ENCODE measurements at regions of chr1 and their contacts with region 1.

Region 1: GRCh38 chr1:95043141-95043980 is 29.4 kb downstream of the ALG14 start:
- DNase-seq: peak; percentile 70
- H3K4me3 ChIP-seq: peak overlapping the region in 1 of 2 experiments; percentile 20; a peak in 1 of 4 replicates
- H3K27ac ChIP-seq: no peak overlapping the region; a peak in 1 of 4 replicates
- H3K4me1 ChIP-seq: peaks cover 8 to 9% of the 10 kb centered on the region in 2 experiments; a peak in 3 of 4 replicates
- H3K27me3 ChIP-seq: no peaks in the 10 kb centered on the region
- CTCF ChIP-seq: peak; percentile 99
- EP300 ChIP-seq: no peak
- RAD21 ChIP-seq: peak; percentile 98

Region 2: GRCh38 chr1:94522304-94522703 is 521.1 kb before region 1 on chr1:
- CTCF ChIA-PET with region 1: interaction called, 11 read pairs
- POLR2A ChIA-PET with region 1: no interaction called
- DNase-seq: no peak
- H3K4me3 ChIP-seq: no peak overlapping the region
- H3K27ac ChIP-seq: no peak overlapping the region
- H3K4me1 ChIP-seq: peaks cover 0 to 2% of the 10 kb centered on the region in 2 experiments; a peak in 1 of 4 replicates
- H3K27me3 ChIP-seq: no peaks in the 10 kb centered on the region
- CTCF ChIP-seq: peak; percentile 68
- EP300 ChIP-seq: no peak
- RAD21 ChIP-seq: peak; percentile 87

Region 3: GRCh38 chr1:94825936-94826335 is 217.4 kb before region 1 on chr1:
- CTCF ChIA-PET with region 1: interaction called, 19 read pairs
- POLR2A ChIA-PET with region 1: no interaction called
- DNase-seq: no peak
- H3K4me3 ChIP-seq: no peak overlapping the region
- H3K27ac ChIP-seq: no peak overlapping the region
- H3K4me1 ChIP-seq: peaks cover 0 to 15% of the 10 kb centered on the region in 2 experiments; a peak in 2 of 4 replicates
- H3K27me3 ChIP-seq: no peaks in the 10 kb centered on the region
- CTCF ChIP-seq: no peak
- EP300 ChIP-seq: no peak
- RAD21 ChIP-seq: no peak

Region 4: GRCh38 chr1:94854458-94855306 is 188.7 kb before region 1 on chr1:
- CTCF ChIA-PET with region 1: interaction called, 186 read pairs
- POLR2A ChIA-PET with region 1: interaction called, 12 read pairs
- DNase-seq: peak; percentile 89
- H3K4me3 ChIP-seq: peak overlapping the region; percentile 49 to 60
- H3K27ac ChIP-seq: peak overlapping the region; percentile 78 to 93
- H3K4me1 ChIP-seq: peaks cover 11 to 17% of the 10 kb centered on the region in 2 experiments; a peak in 3 of 4 replicates
- H3K27me3 ChIP-seq: no peaks in the 10 kb centered on the region
- CTCF ChIP-seq: peak; percentile 93
- EP300 ChIP-seq: peak in 1 of 2 experiments; percentile 78; a peak in 2 of 4 replicates
- RAD21 ChIP-seq: peak; percentile 93

Region 5: DNA sequence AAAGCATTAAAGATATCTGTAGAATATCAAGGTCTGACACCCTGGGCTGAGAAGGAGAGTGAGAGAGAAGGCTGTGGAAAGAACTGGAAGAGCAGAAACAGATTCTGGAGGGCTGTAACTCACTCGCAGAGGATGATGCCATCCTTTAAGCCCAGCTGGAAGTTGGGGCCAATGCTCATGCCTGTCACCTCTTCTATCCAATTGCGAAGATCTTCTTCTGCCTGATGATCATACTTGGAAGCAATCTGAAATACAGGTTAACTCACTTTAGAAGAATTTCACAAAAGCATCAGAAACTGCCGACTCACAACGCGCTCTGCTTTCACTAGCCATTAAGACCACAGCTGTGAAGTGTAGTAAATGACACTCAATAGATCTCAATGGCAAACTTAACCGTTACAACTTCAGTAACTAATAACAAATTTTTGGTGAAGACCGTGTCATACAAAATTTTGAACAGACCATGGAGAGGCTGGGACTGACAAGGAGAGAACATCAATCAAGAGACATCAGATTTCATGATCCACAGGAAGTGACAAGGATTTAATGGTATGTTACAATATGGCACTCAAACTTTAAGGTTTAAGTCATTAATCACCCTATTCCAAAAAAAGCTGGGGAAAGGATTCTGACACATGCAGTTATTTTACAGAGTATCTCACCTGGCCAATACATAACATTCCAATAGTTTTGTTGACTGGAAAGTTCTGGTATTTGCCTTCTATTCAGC is 139.9 kb before region 1 on chr1:
- CTCF ChIA-PET with region 1: interaction called, 16 read pairs
- POLR2A ChIA-PET with region 1: no interaction called
- DNase-seq: no peak
- H3K4me3 ChIP-seq: no peak overlapping the region
- H3K27ac ChIP-seq: peak overlapping the region; percentile 33 to 34; a peak in 3 of 4 replicates
- H3K4me1 ChIP-seq: peaks cover 12 to 35% of the 10 kb centered on the region in 2 experiments; a peak in 3 of 4 replicates
- H3K27me3 ChIP-seq: no peaks in the 10 kb centered on the region
- CTCF ChIP-seq: no peak
- EP300 ChIP-seq: no peak
- RAD21 ChIP-seq: no peak

Region 6: DNA sequence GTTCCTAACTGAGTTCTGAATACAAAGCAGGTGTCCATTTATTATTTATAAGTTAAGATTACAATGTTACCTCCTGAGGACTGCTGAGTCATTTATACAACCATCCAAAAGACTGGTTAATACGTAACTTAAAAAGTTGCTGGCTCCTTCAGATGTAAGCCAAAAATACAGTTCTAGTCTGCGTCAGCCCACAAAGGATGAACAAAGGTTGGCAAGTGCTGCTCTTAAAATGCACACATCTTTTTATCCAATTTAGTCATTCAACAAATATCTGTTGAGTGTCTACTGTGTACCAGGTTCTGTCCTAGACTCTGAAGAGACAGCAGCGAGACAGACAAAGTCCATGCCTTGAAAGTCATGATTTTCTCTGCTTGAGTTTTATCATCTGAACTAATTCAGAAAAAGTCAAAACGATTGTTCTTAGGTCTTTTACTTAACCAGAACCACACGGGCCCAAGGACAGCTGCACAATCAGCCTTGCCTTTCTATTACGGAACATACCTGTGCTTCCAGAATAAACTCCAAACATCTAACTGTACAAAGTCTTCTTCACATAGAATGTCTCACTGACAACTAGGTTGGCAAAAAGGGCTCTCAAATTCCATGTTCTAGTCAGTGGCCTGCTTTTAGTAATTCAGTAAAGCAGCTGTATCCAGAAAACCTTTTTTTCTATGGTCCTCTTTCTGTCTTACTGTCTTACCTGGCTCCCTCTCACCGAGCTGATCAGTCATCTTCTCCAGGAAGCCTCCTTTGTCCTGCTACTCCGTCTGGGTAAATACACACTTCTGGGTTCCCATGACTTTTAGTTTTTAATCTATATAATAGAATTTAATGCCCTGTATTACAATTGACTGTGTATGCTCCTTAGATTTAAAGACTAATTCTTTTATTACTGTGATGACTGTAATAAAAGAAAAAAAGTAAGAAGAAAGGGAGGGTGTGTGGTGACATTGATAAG is 100.9 kb before region 1 on chr1:
- CTCF ChIA-PET with region 1: interaction called, 14 read pairs
- POLR2A ChIA-PET with region 1: no interaction called
- DNase-seq: no peak
- H3K4me3 ChIP-seq: no peak overlapping the region
- H3K27ac ChIP-seq: no peak overlapping the region
- H3K4me1 ChIP-seq: peaks cover 6 to 8% of the 10 kb centered on the region in 2 experiments; a peak in 3 of 4 replicates
- H3K27me3 ChIP-seq: no peaks in the 10 kb centered on the region
- CTCF ChIP-seq: no peak
- EP300 ChIP-seq: no peak
- RAD21 ChIP-seq: no peak

Region 7: DNA sequence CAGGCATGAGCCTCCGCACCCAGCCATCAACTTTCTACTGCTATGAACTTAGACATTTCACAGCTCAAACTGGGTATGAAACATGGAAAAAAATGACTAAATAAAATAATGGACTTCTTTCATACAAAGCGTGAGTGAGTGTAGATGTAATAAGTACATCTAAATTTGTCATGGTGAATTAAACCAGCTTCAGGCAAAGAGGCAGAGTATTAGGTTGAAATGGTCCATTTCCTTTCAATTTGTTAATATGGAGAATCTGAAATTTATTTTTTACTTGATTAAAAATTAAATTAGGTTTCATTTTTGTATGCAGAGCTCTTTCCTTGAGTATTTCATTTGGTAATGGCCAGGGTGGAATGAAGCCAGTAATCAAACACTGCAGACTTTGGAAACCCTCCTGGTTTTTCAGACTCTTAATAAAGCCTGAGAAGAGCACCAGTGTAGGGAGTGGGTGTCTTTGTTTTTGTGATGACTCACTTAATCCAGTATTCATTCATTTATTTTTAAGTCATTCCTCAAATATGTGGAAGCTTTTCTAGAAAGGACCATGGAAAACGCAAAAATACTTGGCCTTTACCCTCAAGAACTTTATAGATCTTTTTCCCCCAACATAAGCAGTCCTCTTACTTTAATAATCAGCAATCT is 19.8 kb before region 1 on chr1:
- CTCF ChIA-PET with region 1: interaction called, 12 read pairs
- POLR2A ChIA-PET with region 1: no interaction called
- DNase-seq: no peak
- H3K4me3 ChIP-seq: peak overlapping the region in 1 of 2 experiments; percentile 11; a peak in 1 of 4 replicates
- H3K27ac ChIP-seq: peak overlapping the region; percentile 79 to 90
- H3K4me1 ChIP-seq: peaks cover 21 to 31% of the 10 kb centered on the region in 2 experiments
- H3K27me3 ChIP-seq: no peaks in the 10 kb centered on the region
- CTCF ChIP-seq: no peak
- EP300 ChIP-seq: peak; percentile 33 to 54; a peak in 3 of 4 replicates
- RAD21 ChIP-seq: no peak